Activated naive CD4-positive, alpha-beta T cell treated with anti-CD3 and anti-CD28 coated beads, Interleukin-2, amount 10 ng/mL, durations not matched to agents 7 days and 5 days (primary cell): ENCODE measurements at regions of chr10 and their contacts with region 1.

Region 1: GRCh38 chr10:47047671-47048525 is 136.7 kb downstream of the PTPN20 start:
- DNase-seq: peak; percentile 84
- H3K4me3 Mint-ChIP-seq: no peak overlapping the region
- H3K27ac Mint-ChIP-seq: no peak overlapping the region
- H3K4me1 Mint-ChIP-seq: peaks cover 14% of the 10 kb centered on the region
- H3K27me3 Mint-ChIP-seq: peaks cover 5% of the 10 kb centered on the region

Region 2: DNA sequence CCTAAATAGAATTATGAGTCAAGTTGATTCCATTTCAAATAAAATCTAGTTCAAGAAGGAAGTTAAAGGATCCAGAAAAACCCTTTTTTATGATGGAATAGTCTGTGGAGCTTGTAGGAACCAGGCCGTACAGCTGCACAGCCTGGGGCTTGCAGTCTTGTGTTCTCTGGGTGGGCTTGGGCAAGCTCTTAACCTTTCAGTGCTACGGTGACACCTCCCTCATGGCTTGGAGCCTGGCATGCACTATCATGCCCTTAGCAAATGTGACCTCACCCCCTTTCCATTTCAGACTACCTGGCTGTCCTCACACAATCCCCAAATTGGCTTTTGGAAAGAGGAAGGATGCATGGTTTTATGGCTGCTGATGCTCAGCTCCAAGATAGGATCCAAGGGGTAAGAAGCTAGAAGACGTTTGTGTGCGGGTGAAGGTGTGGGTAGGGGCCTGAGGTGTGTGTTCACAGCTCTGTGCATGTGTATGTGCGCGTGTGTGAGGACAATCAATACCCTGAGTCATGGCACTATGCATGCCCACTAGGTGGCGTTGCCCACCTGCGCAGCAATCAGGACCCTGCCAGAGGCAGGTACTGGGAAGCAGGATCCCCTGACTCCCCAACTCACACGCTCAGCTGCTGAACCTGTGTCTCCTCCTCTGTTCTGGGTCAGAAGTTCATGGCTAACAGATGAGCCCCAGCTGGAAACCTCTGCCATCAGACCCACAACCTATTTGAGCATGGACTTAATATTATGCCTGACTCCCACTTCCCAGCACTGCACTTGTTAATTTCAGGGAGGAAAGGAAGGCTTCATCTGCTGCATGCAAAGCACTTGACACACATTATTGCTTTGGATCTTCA is 23.3 kb before region 1 on chr10:
- CTCF ChIA-PET with region 1: interaction called, 40 read pairs
- DNase-seq: peak; percentile 81
- H3K4me3 Mint-ChIP-seq: no peak overlapping the region
- H3K27ac Mint-ChIP-seq: no peak overlapping the region
- H3K4me1 Mint-ChIP-seq: no peaks in the 10 kb centered on the region
- H3K27me3 Mint-ChIP-seq: peaks cover 3% of the 10 kb centered on the region

Region 3: GRCh38 chr10:47058961-47059391 is 11.1 kb after region 1 on chr10:
- CTCF ChIA-PET with region 1: interaction called, 15 read pairs
- DNase-seq: no peak
- H3K4me3 Mint-ChIP-seq: no peak overlapping the region
- H3K27ac Mint-ChIP-seq: no peak overlapping the region
- H3K4me1 Mint-ChIP-seq: no peaks in the 10 kb centered on the region
- H3K27me3 Mint-ChIP-seq: peaks cover 16% of the 10 kb centered on the region

Region 4: DNA sequence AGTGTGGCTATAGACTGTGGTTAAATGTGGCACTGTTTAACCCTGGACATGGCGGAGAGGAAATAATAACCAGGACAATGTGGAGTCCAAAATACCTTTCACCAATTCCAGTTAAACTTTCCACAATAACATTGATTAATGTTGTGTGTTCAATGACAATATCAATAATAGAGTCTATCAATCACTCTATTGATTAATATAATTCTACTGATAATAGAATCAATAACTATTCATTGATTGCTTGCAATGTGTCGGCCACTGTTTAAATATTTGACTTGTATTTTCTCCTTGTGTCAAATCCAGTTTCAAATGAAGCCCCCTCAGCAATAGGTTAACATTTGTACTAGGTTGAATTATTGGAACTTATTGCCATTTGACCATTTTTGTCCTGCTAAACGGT is 50.3 kb after region 1 on chr10:
- CTCF ChIA-PET with region 1: no interaction called
- DNase-seq: no peak
- H3K4me3 Mint-ChIP-seq: no peak overlapping the region
- H3K27ac Mint-ChIP-seq: no peak overlapping the region
- H3K4me1 Mint-ChIP-seq: no peaks in the 10 kb centered on the region
- H3K27me3 Mint-ChIP-seq: peaks cover 21% of the 10 kb centered on the region

Region 5: DNA sequence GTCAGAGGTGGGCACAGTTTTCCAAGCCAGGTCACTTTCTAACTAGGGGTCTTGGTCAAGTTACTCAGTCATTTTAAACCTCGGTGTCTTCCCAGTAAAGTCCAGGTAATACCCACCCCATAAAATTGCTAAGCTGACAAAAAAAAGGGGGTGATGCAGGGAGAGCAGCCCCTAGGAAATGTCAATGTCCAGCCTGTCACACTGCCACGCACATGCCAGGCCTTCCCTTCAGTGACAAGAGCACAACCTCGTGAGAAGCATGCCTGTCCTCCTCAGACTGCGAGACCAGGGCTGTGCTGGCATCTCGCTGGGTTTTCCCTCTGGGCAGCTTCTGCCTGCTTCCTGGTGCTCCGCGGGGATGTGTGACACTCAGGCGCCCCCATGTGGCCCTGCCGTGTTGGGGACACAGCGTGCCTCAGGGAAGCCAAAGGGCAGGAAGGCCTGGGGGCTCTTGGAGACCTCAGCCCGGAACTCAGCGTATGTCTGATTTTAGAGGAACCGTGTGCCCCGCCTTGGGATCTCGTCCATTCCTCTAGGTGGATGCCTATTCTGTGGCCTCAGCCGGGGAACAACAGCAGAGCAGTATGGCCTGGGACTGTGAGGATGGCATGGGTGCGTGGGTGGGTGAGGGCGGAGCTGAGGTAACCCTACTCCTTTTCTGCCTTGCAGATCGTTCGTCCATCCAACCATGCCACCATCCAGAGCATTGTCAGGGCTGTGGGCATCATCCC is 264.2 kb after region 1 on chr10:
- CTCF ChIA-PET with region 1: interaction called, 288 read pairs
- DNase-seq: peak; percentile 91
- H3K4me3 Mint-ChIP-seq: peak overlapping the region; percentile 21
- H3K27ac Mint-ChIP-seq: peak overlapping the region; percentile 87
- H3K4me1 Mint-ChIP-seq: peaks cover 25% of the 10 kb centered on the region
- H3K27me3 Mint-ChIP-seq: peaks cover 15% of the 10 kb centered on the region

Region 6: GRCh38 chr10:47340608-47341170 is 292.8 kb after region 1 on chr10:
- CTCF ChIA-PET with region 1: interaction called, 16 read pairs
- DNase-seq: peak; percentile 79
- H3K4me3 Mint-ChIP-seq: no peak overlapping the region
- H3K27ac Mint-ChIP-seq: no peak overlapping the region
- H3K4me1 Mint-ChIP-seq: no peaks in the 10 kb centered on the region
- H3K27me3 Mint-ChIP-seq: peaks cover 16% of the 10 kb centered on the region